Calu3 (cell line): ENCODE measurements at regions of chr6 and their contacts with region 1.

Region 1: GRCh38 chr6:15621203-15622044 is 41.4 kb downstream of the DTNBP1 start:
- DNase-seq: no peak
- H3K4me3 Mint-ChIP-seq: no peak overlapping the region
- H3K27ac Mint-ChIP-seq: no peak overlapping the region
- H3K4me1 Mint-ChIP-seq: no peaks in the 10 kb centered on the region
- H3K27me3 Mint-ChIP-seq: no peaks in the 10 kb centered on the region
- CTCF ChIP-seq: no peak

Region 2: DNA sequence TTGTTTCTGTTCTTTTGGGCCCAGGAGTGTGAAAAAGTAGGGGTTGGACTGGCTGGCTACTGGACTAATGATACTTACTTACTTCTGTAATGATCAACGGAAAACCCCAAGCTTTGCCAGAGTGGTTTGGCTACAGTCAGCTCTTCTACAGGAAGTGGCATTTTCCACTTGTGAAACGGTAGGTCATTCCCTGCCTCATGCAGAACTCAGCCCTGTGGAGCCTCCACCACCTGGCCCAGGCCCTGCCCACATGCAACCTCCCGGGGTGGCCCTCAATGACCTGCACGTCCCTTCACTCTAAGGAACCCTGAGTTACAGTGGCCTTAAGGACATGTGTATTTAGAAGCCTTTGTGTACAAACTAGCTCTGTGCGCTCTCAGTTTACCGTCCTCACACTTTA is 99.0 kb before region 1 on chr6:
- CTCF ChIA-PET with region 1: no interaction called
- intact Hi-C with region 1: loop called (anchors 10 kb)
- DNase-seq: no peak
- H3K4me3 Mint-ChIP-seq: no peak overlapping the region
- H3K27ac Mint-ChIP-seq: no peak overlapping the region
- H3K4me1 Mint-ChIP-seq: peaks cover 14% of the 10 kb centered on the region
- H3K27me3 Mint-ChIP-seq: no peaks in the 10 kb centered on the region
- CTCF ChIP-seq: no peak